ENCODE measurements at regions of chr9 and their contacts with region 1.

Region 1: DNA sequence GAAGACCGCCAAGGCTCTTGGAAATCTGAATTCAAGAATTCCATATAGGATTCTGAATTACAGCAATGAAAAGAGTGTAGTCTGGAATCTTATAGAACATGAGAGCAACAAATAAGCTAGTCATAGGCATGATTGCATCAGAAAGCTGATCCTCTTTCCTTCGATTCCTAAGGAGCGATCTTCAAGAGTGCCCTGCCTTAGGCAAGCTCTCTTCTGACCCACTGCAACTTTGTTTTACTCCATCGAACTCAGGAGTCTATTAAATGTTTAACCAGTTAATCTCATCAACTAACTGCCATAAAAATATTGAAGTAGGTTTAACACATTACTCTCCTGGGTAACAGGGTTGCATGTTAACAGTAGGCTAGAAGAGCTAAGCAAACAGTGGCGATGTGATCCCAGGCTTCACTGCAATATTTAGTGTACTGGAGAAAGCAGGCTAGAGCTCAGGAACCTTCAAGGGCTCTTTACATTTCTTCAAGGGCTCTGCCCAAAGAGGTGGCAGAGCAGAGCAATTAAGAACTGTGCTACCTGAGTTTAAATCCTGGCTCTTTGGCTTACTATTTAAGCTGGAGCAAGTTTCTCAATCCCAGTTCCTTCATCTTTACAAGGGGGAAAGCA is 146.3 kb downstream of the RORB start:
- DNase-seq: no peak
- H3K4me3 Mint-ChIP-seq: no peak overlapping the region
- H3K27ac Mint-ChIP-seq: no peak overlapping the region
- H3K4me1 Mint-ChIP-seq: no peaks in the 10 kb centered on the region
- H3K27me3 Mint-ChIP-seq: peaks cover 6% of the 10 kb centered on the region

Region 2: DNA sequence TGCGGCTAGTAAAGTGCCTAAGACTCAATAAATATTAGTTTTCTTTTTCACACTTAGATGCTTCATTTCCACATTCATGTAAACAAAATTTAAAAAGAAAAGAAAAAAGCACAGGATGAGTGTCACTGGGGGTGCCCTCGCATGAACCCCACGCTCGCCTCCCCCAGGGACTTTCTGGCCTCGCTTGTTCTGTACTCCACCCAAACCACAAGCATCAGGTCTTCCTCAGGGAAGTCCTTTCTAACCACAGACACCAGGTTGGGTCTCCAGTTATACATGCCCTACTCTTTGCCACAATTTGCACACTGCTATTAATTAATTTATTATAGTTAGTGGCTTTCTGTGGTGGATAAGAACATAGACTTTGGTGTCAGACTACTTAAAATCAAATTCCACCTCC is 53.8 kb before region 1 on chr9:
- intact Hi-C with region 1: loop called (anchors 5 kb)
- DNase-seq: no peak
- H3K4me3 Mint-ChIP-seq: no peak overlapping the region
- H3K27ac Mint-ChIP-seq: no peak overlapping the region
- H3K4me1 Mint-ChIP-seq: peaks cover 2% of the 10 kb centered on the region
- H3K27me3 Mint-ChIP-seq: no peaks in the 10 kb centered on the region